Activated naive CD4-positive, alpha-beta T cell treated with anti-CD3 and anti-CD28 coated beads for 36 hours (primary cell): ENCODE measurements at regions of chr15 and their contacts with region 1.

Region 1: GRCh38 chr15:79380755-79381497 is 51.2 kb upstream of the MINAR1 start:
- DNase-seq: peak; percentile 86
- H3K4me3 Mint-ChIP-seq: no peak overlapping the region
- H3K27ac Mint-ChIP-seq: no peak overlapping the region
- H3K4me1 Mint-ChIP-seq: no peaks in the 10 kb centered on the region
- H3K27me3 Mint-ChIP-seq: no peaks in the 10 kb centered on the region

Region 2: DNA sequence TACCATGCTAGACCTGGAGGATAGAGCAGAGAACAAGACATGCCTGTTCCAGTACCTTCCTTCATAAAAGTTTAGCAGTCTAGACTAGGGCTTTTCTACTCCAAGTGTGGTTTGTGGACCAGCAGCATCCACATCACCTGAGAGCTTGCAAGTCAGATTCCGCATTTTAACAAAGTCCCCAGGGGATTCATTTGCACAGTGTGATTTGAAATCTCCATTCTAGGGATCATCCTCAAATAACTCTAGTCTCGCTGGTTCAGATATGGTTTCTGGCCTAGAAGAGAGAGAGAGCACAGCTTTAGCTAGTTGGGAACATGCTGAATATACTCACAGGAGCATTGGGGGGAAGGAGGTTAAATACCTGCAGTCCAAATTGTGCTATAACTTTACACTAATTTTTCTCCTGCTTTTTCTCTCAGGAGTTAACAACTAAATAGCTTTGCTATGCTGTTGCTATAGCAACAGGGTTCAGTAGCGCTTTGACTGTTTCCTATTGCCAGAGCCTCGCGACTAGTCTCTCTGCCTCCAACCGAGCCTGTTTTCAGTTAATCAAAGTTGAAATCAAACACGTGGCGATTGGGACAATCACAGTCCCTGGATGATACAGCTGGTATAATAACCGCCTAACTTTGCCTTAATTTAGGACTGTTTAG is 226.3 kb before region 1 on chr15:
- CTCF ChIA-PET with region 1: no interaction called
- intact Hi-C with region 1: no loop called
- DNase-seq: no peak
- H3K4me3 Mint-ChIP-seq: no peak overlapping the region
- H3K27ac Mint-ChIP-seq: no peak overlapping the region
- H3K4me1 Mint-ChIP-seq: no peaks in the 10 kb centered on the region
- H3K27me3 Mint-ChIP-seq: peaks cover 7% of the 10 kb centered on the region

Region 3: GRCh38 chr15:79349525-79349924 is 31.4 kb before region 1 on chr15:
- CTCF ChIA-PET with region 1: interaction called, 12 read pairs
- intact Hi-C with region 1: no loop called
- DNase-seq: no peak
- H3K4me3 Mint-ChIP-seq: no peak overlapping the region
- H3K27ac Mint-ChIP-seq: no peak overlapping the region
- H3K4me1 Mint-ChIP-seq: no peaks in the 10 kb centered on the region
- H3K27me3 Mint-ChIP-seq: no peaks in the 10 kb centered on the region

Region 4: GRCh38 chr15:79394231-79394630 is 13.3 kb after region 1 on chr15:
- CTCF ChIA-PET with region 1: interaction called, 15 read pairs
- intact Hi-C with region 1: no loop called
- DNase-seq: no peak
- H3K4me3 Mint-ChIP-seq: no peak overlapping the region
- H3K27ac Mint-ChIP-seq: no peak overlapping the region
- H3K4me1 Mint-ChIP-seq: no peaks in the 10 kb centered on the region
- H3K27me3 Mint-ChIP-seq: no peaks in the 10 kb centered on the region

Region 5: GRCh38 chr15:79513940-79514339 is 133.0 kb after region 1 on chr15:
- CTCF ChIA-PET with region 1: no interaction called
- intact Hi-C with region 1: no loop called
- DNase-seq: no peak
- H3K4me3 Mint-ChIP-seq: no peak overlapping the region
- H3K27ac Mint-ChIP-seq: no peak overlapping the region
- H3K4me1 Mint-ChIP-seq: no peaks in the 10 kb centered on the region
- H3K27me3 Mint-ChIP-seq: peaks cover 2% of the 10 kb centered on the region

Region 6: GRCh38 chr15:79596051-79596507 is 215.2 kb after region 1 on chr15:
- CTCF ChIA-PET with region 1: interaction called, 103 read pairs
- intact Hi-C with region 1: loop called (anchors 1 kb)
- DNase-seq: peak; percentile 75
- H3K4me3 Mint-ChIP-seq: no peak overlapping the region
- H3K27ac Mint-ChIP-seq: no peak overlapping the region
- H3K4me1 Mint-ChIP-seq: no peaks in the 10 kb centered on the region
- H3K27me3 Mint-ChIP-seq: peaks cover 10% of the 10 kb centered on the region

Region 7: DNA sequence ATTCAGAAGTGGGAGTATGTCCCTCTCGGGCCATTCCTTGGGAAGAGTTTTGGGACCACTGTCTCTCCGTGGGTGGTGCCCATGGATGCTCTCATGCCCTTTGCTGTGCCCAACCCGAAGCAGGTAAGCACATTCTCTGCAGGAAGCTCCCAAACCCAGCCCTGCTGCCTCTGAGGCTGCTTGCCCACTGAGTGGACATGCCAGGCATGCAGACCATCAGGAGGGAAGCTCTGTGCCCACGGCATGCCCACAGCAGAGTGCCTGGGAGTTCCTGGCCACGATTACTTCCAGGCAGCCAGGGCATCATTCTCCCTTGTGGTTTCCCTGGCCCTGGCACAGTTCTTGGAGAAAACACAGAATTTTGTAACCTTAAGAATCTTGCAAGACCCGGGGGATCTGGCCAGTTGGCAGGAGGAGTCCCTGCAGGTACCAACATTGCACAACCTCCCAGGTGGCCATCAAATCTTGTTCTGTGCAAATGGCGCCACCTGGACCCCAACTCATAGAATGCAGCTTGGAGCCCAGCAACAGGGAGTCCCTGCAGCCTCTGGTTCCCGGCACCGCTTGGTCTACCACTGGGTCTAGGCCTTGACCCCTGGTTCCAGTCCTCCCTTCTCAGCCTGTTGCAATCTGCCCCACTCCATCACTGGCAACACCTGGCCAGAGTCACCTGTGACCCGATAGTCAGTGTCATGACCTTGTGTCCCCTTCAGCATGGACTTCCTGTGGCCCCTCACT is 792.3 kb after region 1 on chr15:
- CTCF ChIA-PET with region 1: interaction called, 3 read pairs
- intact Hi-C with region 1: loop called (anchors 2 kb)
- DNase-seq: peak; percentile 89
- H3K4me3 Mint-ChIP-seq: no peak overlapping the region
- H3K27ac Mint-ChIP-seq: no peak overlapping the region
- H3K4me1 Mint-ChIP-seq: no peaks in the 10 kb centered on the region
- H3K27me3 Mint-ChIP-seq: no peaks in the 10 kb centered on the region